ENCODE measurements at regions of chr4 and their contacts with region 1.

Region 1: DNA sequence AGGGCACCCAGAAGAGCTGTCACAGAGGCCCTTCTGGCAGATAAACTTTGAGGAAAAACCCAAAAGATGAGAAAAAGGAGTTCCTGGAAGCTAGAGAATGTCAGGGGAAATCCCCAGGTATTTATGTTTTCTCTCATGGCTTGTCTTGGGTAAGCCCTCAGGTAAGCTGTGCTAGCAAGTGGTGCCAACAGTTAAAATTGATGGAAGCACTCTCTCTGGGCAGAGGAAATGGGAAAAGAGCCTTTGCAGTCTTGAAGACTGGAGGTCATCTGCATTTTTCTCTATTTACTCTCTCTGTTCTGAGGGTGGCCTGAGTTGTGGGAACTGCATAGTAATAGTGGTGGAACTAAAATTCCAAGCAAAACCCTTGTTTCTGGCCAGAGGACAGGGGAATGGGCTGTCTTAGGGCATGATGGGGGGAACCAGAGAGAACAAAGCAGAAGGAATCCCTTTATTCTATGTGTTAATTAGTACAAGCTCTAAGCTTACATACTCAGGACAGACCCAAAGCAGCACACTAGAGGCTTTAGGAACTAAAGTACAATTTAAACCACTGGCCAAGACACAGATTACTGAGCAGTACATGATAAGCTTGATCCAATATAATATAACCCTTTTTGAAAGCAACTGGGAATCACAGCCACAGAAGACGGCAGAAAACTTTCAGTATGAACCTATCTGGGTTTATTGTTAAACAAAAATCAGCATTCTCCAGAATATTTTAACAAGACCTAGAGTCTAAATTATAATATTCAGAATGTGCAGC is 53.3 kb upstream of the SLC10A4 start:
- DNase-seq: no peak
- ATAC-seq: no peak
- H3K4me3 ChIP-seq: no peak overlapping the region
- H3K27ac ChIP-seq: no peak overlapping the region
- H3K4me1 ChIP-seq: no peaks in the 10 kb centered on the region
- H3K27me3 ChIP-seq: no peaks in the 10 kb centered on the region
- CTCF ChIP-seq: no peak

Region 2: GRCh38 chr4:48409203-48409602 is 20.7 kb before region 1 on chr4:
- CTCF ChIA-PET with region 1: no interaction called
- POLR2A ChIA-PET with region 1: no interaction called
- intact Hi-C with region 1: no loop called
- DNase-seq: no peak
- ATAC-seq: no peak
- H3K4me3 ChIP-seq: no peak overlapping the region
- H3K27ac ChIP-seq: no peak overlapping the region
- H3K4me1 ChIP-seq: no peaks in the 10 kb centered on the region
- H3K27me3 ChIP-seq: no peaks in the 10 kb centered on the region
- CTCF ChIP-seq: no peak

Region 3: DNA sequence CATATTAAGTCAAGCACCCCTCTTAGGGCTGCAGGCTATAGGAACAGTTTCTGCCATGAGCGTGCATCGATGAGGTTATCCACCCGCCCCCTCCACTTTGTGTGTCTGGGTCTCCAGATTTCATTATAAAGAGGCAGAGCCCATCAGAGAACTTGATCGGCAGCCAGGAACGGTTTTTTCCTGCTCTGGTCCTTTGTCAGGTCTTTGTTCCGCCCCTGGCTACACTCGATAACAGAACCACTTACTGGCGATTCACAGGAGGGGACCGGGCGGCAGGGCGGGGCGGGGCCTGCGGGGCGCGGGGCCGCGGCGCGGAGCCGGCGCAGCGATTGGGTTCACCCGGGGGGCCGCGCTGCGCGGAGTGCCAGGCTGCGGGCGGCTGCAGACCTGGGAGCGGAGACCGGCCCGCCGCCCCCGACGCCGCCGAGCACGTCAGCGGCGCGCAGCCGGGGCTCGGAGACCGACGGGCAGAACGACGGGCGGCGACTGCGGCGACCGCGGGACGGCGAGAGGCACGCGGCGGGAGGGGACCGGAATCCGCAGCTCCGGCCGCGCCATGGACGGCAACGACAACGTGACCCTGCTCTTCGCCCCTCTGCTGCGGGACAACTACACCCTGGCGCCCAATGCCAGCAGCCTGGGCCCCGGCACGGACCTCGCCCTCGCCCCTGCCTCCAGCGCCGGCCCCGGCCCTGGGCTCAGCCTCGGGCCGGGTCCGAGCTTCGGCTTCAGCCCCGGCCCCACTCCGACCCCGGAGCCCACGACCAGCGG is 53.3 kb after region 1 on chr4 and contains the start of gene SLC10A4:
- CTCF ChIA-PET with region 1: no interaction called
- POLR2A ChIA-PET with region 1: no interaction called
- intact Hi-C with region 1: loop called (anchors 10 kb)
- DNase-seq: no peak
- ATAC-seq: peak; percentile 49
- H3K4me3 ChIP-seq: peak within 1 kb of the TSS; percentile 50
- H3K27ac ChIP-seq: no peak within 1 kb of the TSS
- H3K4me1 ChIP-seq: no peaks in the 10 kb centered on the region
- H3K27me3 ChIP-seq: no peaks in the 10 kb centered on the region
- CTCF ChIP-seq: no peak
- total RNA-seq, gene SLC10A4: not detected in 2 replicates

Region 4: GRCh38 chr4:48526406-48526805 is 96.5 kb after region 1 on chr4:
- CTCF ChIA-PET with region 1: no interaction called
- POLR2A ChIA-PET with region 1: no interaction called
- intact Hi-C with region 1: loop called (anchors 2 kb)
- DNase-seq: no peak
- ATAC-seq: no peak
- H3K4me3 ChIP-seq: no peak overlapping the region
- H3K27ac ChIP-seq: no peak overlapping the region
- H3K4me1 ChIP-seq: no peaks in the 10 kb centered on the region
- H3K27me3 ChIP-seq: no peaks in the 10 kb centered on the region
- CTCF ChIP-seq: no peak

Measured in PC-3 (cell line).